Breast epithelium (tissue), 4 donors: ENCODE measurements at regions of chr2 and their contacts with region 1.

Region 1: GRCh38 chr2:45046786-45047185 is 37.5 kb upstream of the SIX2 start:
- DNase-seq: no peak
- H3K4me3 ChIP-seq: no peak overlapping the region
- H3K27ac ChIP-seq: no peak overlapping the region
- H3K4me1 ChIP-seq: no peaks in the 10 kb centered on the region
- H3K27me3 ChIP-seq: no peaks in the 10 kb centered on the region
- CTCF ChIP-seq: no peak
- POLR2A ChIP-seq: no peak

Region 2: DNA sequence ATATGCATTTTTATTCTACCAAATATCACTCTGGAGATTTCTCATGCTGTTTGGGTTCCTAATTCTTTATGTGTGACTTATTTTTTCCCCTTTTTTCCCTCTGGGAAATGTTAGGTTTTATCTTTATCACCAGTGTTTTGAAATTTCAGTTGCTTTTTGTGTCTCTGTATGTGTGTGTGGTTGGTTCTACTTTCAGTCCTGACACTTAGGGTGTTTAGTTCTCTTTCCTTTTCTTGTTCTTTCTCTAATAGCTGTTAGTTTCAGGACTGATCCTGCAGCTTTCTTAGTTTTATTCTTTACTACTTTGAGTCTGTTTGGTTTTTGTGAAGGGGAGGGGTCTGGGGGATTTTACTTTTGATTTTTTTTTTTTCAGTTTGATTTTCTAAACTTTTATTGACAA is 855.0 kb before region 1 on chr2:
- intact Hi-C with region 1: no loop called
- DNase-seq: no peak
- H3K4me3 ChIP-seq: no peak overlapping the region
- H3K27ac ChIP-seq: no peak overlapping the region
- H3K4me1 ChIP-seq: peaks cover 0 to 5% of the 10 kb centered on the region in 2 donors
- H3K27me3 ChIP-seq: no peaks in the 10 kb centered on the region
- CTCF ChIP-seq: no peak
- POLR2A ChIP-seq: no peak

Region 3: GRCh38 chr2:44912660-44913059 is 134.1 kb before region 1 on chr2:
- intact Hi-C with region 1: no loop called
- DNase-seq: no peak
- H3K4me3 ChIP-seq: no peak overlapping the region
- H3K27ac ChIP-seq: no peak overlapping the region
- H3K4me1 ChIP-seq: no peaks in the 10 kb centered on the region
- H3K27me3 ChIP-seq: no peaks in the 10 kb centered on the region
- CTCF ChIP-seq: no peak
- POLR2A ChIP-seq: no peak

Region 4: GRCh38 chr2:45567974-45568789 is 521.4 kb after region 1 on chr2:
- intact Hi-C with region 1: loop called (anchors 5 kb)
- DNase-seq: no peak
- H3K4me3 ChIP-seq: peak overlapping the region in 1 of 3 donors; percentile 8
- H3K27ac ChIP-seq: no peak overlapping the region
- H3K4me1 ChIP-seq: no peaks in the 10 kb centered on the region
- H3K27me3 ChIP-seq: no peaks in the 10 kb centered on the region
- CTCF ChIP-seq: no peak
- POLR2A ChIP-seq: no peak